ENCODE measurements at regions of chr19 and their contacts with region 1.

Region 1: DNA sequence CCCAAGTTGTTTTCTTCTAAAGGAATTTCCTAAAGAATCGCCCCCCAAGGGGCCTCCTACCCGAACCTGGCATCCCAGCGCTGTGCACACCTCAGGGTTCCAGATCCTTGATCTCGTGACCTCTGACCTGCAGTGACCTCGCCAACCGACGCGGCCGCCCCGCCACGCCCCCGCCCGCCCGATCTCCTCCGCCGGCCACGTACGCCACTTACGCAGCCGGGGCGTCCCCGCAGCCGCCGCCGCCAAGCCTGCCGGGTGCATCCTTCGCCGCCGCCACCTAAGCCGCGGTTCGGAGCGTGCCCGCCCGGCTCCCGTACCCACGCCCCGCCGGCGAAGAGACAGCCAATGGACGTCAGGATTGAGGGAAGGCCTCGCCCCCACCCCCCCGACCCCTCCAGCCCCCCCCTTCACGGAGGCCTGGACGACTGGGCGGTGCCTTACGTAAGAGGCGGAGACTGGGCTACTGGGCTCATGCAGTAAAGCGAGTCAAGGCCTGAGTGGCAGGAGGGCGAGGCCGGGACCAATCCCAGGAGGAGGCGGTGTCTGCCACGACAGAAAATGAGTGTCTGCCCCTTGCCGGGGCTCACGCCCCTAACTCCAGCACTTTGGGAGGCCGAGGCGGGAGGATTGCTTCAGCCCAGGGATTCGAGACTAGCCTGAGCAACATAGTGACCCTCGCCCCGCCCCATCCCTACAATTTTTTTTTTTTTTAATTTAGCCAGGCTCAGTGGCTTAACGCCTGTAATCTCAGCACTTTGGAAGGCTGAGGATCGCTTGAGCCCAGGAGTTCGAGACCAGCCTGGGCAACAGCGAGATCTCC is at the start of gene YIF1B:
- DNase-seq: peak; percentile 98
- H3K4me3 ChIP-seq: peak within 1 kb of the TSS; percentile 94
- H3K27ac ChIP-seq: peak within 1 kb of the TSS; percentile 78
- H3K4me1 ChIP-seq: peaks cover 22% of the 10 kb centered on the region
- CTCF ChIP-seq: no peak
- total RNA-seq, gene YIF1B: 44.3 and 68.3 TPM in 2 replicates

Region 2: GRCh38 chr19:37896180-37896579 is 419.7 kb before region 1 on chr19:
- CTCF ChIA-PET with region 1: no interaction called
- POLR2A ChIA-PET with region 1: no interaction called
- intact Hi-C with region 1: loop called (anchors 5 kb)
- DNase-seq: no peak
- H3K4me3 ChIP-seq: no peak overlapping the region
- H3K27ac ChIP-seq: no peak overlapping the region
- H3K4me1 ChIP-seq: peaks cover 16% of the 10 kb centered on the region
- CTCF ChIP-seq: no peak

Region 3: GRCh38 chr19:38263689-38264485 is 52.0 kb before region 1 on chr19:
- CTCF ChIA-PET with region 1: no interaction called
- POLR2A ChIA-PET with region 1: interaction called, 4 read pairs
- intact Hi-C with region 1: loop called (anchors 2 kb)
- DNase-seq: peak; percentile 73
- H3K4me3 ChIP-seq: peak overlapping the region; percentile 67
- H3K27ac ChIP-seq: peak overlapping the region; percentile 36
- H3K4me1 ChIP-seq: peaks cover 15% of the 10 kb centered on the region
- CTCF ChIP-seq: no peak

Region 4: GRCh38 chr19:38374429-38375176 is 58.7 kb after region 1 on chr19 and contains the start of gene PSMD8:
- CTCF ChIA-PET with region 1: no interaction called
- POLR2A ChIA-PET with region 1: no interaction called
- intact Hi-C with region 1: loop called (anchors 1 kb)
- DNase-seq: peak; percentile 100
- H3K4me3 ChIP-seq: peak within 1 kb of the TSS; percentile 84
- H3K27ac ChIP-seq: peak within 1 kb of the TSS; percentile 54
- H3K4me1 ChIP-seq: peaks cover 21% of the 10 kb centered on the region
- CTCF ChIP-seq: peak; percentile 56
- total RNA-seq, gene PSMD8: 224 and 238 TPM in 2 replicates